Sigmoid colon (tissue), 7 donors: ENCODE measurements at regions of chr16 and their contacts with region 1.

Region 1: DNA sequence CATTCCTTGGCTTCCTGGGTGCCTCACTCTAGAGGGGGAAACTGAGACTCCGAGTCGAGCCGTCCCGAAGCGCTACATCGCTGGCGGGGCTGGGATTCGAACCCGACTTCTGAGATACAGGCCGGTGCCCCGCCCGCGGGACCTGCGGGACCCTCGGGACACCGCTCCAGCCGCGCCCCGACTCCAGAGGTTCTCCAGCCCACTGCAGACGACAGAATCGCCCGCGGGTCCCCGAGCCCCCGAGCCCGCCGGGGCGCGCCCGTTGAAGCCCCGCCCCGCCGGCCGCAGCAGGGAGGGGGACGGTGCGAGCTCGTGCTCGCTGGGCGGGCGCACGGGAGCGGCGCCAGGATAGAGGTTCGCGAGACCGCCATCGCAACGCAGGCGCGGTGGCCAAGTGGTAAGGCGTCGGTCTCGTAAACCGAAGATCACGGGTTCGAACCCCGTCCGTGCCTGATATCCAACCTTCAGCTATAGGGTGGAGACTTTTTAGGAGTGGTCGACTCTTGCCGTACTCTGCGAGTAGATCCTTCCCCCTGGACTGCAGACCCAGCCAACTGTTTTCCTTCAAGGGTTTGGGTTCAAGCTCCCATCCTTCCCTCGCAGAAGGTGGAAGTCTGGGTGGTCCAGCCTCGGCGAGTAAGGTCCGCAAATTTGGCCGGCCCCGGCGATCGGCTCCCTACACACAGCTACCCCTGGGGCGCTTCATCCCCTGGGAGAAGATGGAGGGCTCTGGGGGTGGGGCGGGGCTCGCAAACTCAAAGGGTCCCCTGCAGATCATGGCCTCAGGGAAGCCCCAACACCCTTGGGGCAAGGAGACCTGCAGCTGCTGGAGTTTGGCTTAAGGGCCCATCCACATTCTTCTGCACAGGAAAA is 214.6 kb downstream of the MRTFB start:
- DNase-seq: peak; percentile 96
- H3K4me3 ChIP-seq: peak overlapping the region; percentile 66 to 83 (median 82)
- H3K27ac ChIP-seq: peak overlapping the region; percentile 83 to 93 (median 88)
- H3K4me1 ChIP-seq: peaks cover 4 to 19% (median 13%) of the 10 kb centered on the region in 4 donors
- H3K27me3 ChIP-seq: no peaks in the 10 kb centered on the region
- CTCF ChIP-seq: no peak
- EP300 ChIP-seq: no peak
- POLR2A ChIP-seq: no peak

Region 2: GRCh38 chr16:14632692-14633569 is 347.2 kb after region 1 on chr16 and contains the start of gene BFAR:
- intact Hi-C with region 1: loop called (anchors 10 kb)
- DNase-seq: peak; percentile 100
- H3K4me3 ChIP-seq: peak within 1 kb of the TSS; percentile 80 to 88 (median 82)
- H3K27ac ChIP-seq: peak within 1 kb of the TSS; percentile 91 to 96 (median 94)
- H3K4me1 ChIP-seq: peaks cover 0 to 62% (median 59%) of the 10 kb centered on the region in 4 donors
- H3K27me3 ChIP-seq: no peaks in the 10 kb centered on the region
- CTCF ChIP-seq: no peak
- EP300 ChIP-seq: peak in 1 of 4 donors; percentile 60
- POLR2A ChIP-seq: peak in 1 of 2 donors; percentile 99
- total RNA-seq, gene BFAR: 52.1 to 64.9 (median 61.2) TPM